Posterior vena cava (tissue), 2 donors: ENCODE measurements at regions of chr19 and their contacts with region 1.

Region 1: DNA sequence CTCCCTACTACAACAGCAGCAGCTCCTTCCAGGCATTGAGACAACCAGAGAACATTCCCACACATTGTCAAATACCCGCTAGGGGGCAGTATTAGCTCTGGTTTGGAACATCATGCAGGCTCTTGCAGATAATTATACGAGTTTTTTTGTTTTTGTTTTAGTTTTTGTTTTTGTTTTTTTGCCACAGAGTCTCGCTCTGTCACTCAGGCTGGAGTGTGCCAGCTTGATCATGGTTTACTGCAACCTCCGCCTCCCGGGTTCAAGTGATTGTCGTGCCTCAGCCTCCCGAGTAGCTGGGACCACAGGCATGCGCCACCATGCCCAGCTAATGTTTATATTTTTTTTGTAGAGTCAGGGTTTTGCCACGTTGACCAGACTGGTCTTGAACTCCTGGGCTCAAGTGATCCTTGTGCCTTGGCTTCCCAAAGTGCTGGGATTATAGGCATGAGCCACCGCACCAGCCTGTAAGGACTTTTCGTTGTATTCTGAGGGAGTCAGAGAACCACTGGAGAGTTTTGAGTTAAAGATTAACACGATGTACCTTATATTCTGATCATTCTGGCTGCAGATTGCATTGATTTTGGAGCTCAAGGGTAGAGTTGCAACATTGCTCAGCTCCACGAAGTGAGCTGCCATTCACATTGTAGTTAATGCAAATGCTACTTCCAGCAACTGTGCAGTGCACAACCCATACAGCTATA is 41.7 kb upstream of the CEACAM20 start:
- DNase-seq: no peak

Region 2: DNA sequence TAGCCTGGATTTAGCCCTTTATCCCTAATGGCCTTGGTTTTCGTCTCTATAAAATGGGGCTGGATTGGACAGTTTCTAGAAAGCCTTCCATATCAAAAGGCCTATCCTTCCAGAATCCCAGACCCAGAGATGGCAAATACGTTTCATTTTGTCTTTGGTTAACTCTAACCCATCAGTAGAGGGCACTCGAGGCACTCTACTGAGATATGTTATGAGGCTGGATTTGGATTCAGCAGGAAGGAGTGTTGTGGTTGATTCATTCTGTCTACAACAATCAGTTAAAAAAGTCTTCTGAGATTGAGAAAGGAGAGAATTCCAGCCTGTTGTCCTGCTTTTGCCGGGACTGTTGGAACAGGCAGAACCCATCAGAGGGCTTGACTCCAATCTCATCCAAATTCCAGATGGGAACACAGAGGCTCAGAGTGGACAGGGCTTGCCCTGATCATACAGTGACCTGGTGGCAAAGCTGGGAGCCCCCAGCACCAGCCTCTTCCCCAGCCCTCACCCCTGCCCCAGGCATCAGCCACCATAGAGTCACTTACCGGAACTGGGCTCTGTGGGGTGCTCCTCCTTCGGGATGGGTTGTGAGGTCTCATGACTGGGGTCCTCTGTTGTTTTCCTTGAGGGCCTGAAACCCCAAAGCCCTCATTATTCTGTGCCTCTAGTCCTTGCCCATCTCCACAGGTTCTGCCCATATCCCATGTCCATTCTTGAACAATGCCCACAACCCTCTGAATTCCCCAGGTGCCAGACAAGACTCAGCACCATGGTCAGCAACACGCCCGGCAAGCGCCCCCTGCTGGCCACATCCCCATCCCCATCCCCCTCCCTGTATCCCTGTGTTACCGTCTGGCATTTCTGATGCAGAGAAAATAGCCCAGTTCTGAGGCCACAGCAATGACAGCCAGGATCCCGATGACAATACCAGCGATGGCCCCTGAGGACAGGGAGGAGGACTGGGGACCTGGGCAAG is 58.5 kb before region 1 on chr19:
- intact Hi-C with region 1: no loop called
- DNase-seq: no peak

Region 3: DNA sequence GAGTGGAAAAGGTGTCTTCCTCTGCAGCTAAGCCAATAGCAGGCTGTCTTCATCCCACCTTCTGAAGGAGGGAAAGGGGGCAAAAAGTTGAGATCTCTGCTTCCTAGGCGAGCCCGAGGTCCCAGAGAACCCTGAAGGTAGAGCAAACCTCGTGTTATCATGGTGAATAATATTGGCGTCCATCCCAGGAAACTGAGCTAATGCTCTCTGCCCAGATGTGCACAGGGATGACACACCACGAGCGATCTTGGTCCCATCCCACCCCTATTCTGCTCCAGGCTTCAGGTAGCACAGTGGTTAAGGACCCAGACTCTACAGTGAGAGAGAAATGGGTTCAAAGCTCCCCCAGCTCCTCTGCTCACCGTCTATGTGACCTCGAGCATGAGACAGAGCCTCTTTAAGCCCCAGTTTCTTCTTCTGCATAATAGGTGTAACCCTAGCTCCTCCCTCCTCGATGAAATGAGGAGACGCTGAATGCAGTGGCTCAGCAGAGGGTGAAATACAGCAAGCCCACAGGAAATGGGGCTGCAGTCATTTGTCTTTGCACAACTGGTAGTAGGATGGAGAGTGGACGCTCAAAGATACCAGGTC is 31.8 kb before region 1 on chr19:
- intact Hi-C with region 1: no loop called
- DNase-seq: no peak

Region 4: DNA sequence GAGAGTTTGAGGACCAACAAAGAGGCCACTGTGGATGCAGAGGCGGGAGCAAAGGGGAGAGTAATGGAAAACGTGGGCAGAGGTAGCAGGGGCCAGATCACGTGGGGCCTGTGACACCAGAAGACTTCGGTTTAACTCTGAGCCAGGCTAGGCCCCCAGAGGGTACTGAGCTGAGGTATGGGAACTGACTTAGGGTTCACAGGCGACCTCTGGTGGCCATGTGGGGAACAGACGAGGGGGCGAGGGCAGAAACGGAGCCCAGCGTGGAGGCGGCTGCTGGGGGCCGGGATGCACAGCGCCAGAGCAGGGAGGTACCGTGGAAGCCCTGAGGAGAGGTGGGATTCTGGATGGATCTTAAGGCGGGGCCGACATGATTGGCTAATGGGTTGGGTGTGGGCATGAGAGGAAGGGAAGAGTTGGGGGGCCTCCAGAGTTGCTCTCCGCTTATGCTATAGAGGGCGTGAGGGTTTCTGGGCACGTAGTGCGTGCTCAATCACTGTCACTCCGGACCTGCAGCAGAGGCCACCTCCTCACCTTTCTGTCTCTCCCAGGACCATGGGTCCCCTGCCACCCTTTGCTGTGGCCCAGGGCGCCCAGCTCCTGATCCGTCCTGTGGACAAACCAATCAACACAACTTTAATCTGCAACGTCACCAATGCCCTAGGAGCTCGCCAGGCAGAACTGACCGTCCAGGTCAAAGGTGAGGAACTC is 86.2 kb after region 1 on chr19:
- intact Hi-C with region 1: loop called (anchors 5 kb)
- DNase-seq: peak; percentile 90

Region 5: DNA sequence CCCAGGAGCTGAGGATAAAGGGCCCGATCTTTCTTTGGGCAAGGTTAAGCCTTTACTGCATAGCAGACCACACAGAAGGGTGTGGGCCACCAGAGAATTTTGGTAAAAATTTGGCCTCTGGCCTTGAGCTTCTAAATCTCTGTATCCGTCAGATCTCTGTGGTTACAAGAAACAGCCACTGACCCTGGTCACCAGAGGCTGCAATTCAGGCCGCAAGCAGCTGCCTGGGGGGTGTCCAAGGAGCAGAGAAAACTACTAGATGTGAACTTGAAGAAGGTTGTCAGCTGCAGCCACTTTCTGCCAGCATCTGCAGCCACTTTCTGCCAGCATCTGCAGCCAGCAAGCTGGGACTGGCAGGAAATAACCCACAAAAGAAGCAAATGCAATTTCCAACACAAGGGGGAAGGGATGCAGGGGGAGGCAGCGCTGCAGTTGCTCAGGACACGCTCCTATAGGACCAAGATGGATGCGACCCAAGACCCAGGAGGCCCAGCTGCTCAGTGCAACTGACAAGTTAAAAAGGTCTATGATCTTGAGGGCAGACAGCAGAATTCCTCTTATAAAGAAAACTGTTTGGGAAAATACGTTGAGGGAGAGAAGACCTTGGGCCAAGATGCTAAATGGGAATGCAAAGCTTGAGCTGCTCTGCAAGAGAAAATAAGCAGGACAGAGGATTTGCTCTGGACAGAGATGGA is 91.7 kb after region 1 on chr19:
- intact Hi-C with region 1: loop called (anchors 5 kb)
- DNase-seq: no peak